Activated B cell treated with CpG ODN at 0.5 μM for 24 hours (primary cell): ENCODE measurements at regions of chr10 and their contacts with region 1.

Region 1: DNA sequence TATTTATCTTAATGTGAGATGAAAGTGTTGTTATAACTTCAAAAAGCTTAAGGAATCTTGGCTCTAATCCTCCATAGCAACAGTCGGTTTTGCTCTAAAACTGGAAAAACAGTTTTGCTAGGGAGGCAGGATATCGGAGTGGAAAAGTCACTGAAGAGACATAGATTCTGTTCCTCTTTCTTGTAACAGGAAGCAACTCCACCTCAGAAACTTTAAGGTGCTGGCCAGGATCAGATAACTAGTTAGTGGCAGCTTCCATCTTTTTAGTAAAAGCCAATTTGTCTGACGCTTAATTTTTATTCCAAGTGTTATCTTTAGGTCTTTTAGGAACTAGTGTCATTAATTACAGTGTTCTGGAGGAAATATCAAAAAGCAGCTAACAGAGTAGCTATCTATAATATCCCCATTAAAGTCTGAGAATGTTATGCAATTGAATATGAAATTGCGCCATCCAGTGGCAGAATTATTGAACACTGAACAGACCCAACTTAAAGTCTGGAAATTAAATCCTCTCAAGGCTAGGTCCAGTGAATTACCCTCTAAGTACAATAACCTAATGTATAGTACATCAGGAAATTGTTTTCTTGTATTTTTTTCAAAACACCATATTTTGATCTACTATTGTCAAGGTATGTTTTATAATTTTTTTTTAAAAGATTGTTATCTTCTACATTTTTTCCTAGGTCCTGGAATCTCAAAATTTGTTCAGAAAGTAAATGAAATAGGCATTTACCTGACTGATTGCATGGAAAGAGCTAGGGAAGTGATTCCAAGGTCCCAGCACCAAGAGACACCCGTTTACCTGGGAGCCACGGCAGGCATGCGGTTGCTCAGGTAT is 65.9 kb upstream of the CC2D2B start:
- DNase-seq: no peak
- ATAC-seq: peak; percentile 41
- H3K4me3 Mint-ChIP-seq: peak overlapping the region; percentile 66
- H3K27ac Mint-ChIP-seq: peak overlapping the region; percentile 95
- H3K4me1 Mint-ChIP-seq: peaks cover 54% of the 10 kb centered on the region
- H3K27me3 Mint-ChIP-seq: no peaks in the 10 kb centered on the region
- CTCF ChIP-seq: no peak

Region 2: DNA sequence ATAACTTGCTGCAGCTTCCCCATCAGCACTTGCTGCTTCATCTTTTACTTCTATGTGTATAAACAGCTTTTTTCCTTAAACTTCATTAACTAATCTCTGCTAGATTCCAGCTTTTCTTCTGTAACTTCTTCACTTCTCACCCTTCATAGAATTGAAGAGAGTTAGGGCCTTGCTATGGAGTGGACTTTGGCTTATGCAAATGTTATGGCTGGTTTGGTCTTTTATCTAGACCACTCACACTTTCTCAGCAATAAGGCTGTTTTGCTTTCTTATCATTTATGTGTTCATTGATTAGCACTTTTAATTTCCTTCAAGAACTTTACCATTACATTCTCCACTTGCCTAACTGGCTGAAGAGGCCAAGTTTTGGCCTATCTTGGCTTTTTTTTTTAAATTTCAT is 1360.5 kb before region 1 on chr10:
- CTCF ChIA-PET with region 1: no interaction called
- POLR2A ChIA-PET with region 1: no interaction called
- intact Hi-C with region 1: no loop called
- DNase-seq: no peak
- ATAC-seq: no peak
- H3K4me3 Mint-ChIP-seq: no peak overlapping the region
- H3K27ac Mint-ChIP-seq: no peak overlapping the region
- H3K4me1 Mint-ChIP-seq: no peaks in the 10 kb centered on the region
- H3K27me3 Mint-ChIP-seq: no peaks in the 10 kb centered on the region
- CTCF ChIP-seq: no peak

Region 3: DNA sequence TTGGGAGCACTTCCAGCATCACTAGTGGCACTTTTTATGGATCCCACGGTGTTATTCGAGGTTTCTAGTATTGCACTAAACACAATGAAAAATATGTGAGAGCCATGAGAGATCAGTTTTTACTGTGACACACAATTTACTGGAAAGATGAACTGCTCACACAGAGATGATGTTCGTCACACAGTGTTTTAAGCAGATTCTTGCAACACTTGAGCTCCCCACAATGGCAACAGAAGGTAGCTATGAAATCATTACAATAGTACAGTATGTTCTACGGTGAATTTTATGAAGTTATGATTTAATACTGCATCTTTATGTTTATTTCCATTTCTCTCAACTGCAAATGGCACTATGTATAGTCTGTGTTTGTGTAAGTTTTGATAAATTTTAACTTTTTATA is 113.4 kb before region 1 on chr10:
- CTCF ChIA-PET with region 1: interaction called, 8 read pairs
- POLR2A ChIA-PET with region 1: no interaction called
- intact Hi-C with region 1: loop called (anchors 1 kb)
- DNase-seq: no peak
- ATAC-seq: no peak
- H3K4me3 Mint-ChIP-seq: no peak overlapping the region
- H3K27ac Mint-ChIP-seq: no peak overlapping the region
- H3K4me1 Mint-ChIP-seq: peaks cover 34% of the 10 kb centered on the region
- H3K27me3 Mint-ChIP-seq: no peaks in the 10 kb centered on the region
- CTCF ChIP-seq: no peak

Region 4: DNA sequence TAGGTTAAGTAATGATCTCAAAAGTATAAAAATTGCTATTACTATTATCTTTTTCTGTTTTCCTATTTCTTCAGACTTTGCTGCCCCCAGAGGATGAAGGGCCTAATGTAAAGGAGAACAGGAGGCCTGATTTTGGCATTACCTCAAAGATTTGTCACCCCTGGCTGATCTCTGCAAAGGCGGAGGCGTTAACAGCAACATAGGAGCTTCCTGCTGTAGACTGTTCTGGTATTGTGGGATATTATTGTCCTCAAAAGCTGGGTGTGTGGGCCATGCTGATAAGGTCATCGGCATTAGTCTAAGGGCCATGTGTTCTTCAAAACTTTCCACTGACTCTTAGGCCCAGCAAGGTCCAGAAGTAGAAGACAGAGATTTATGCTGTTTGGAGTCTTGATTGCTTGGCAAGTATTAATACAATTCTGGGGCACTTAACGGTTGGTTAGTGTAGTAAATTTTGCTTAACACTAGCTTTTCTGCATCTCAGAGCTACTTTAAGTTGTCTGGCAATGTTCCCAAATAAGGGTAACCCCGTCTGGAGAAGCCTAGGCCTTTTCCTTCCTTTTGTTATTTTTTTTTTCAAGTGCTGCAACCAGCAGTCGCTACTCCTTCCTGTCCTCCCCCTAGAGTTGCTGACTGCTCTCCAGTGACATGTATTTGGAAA is 99.9 kb before region 1 on chr10:
- CTCF ChIA-PET with region 1: interaction called, 38 read pairs
- POLR2A ChIA-PET with region 1: interaction called, 14 read pairs
- intact Hi-C with region 1: loop called (anchors 1 kb)
- DNase-seq: no peak
- ATAC-seq: peak; percentile 83
- H3K4me3 Mint-ChIP-seq: peak overlapping the region; percentile 85
- H3K27ac Mint-ChIP-seq: peak overlapping the region; percentile 99
- H3K4me1 Mint-ChIP-seq: peaks cover 55% of the 10 kb centered on the region
- H3K27me3 Mint-ChIP-seq: no peaks in the 10 kb centered on the region
- CTCF ChIP-seq: no peak

Region 5: DNA sequence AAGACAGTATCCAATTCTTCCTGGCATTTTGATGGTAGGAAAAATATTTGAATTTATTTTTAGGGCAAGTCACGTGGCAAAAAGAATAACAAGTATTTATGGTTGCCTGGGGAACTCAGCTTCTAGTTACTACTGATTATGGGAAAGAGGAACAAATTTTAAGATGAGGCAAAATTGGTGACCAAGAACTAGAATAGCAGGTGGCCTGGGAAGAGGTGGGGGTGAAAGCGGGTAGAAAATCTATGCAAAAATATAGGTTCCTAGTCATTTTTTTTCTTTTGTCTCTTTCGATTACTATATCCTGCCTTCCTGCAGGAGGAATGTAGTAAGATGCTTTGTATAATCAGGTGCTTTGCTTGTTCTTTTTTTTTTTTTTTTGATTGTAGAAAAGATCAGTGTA is 58.1 kb before region 1 on chr10:
- CTCF ChIA-PET with region 1: interaction called, 25 read pairs
- POLR2A ChIA-PET with region 1: interaction called, 298 read pairs
- intact Hi-C with region 1: loop called (anchors 1 kb)
- DNase-seq: no peak
- ATAC-seq: peak; percentile 55
- H3K4me3 Mint-ChIP-seq: peak overlapping the region; percentile 53
- H3K27ac Mint-ChIP-seq: peak overlapping the region; percentile 99
- H3K4me1 Mint-ChIP-seq: peaks cover 95% of the 10 kb centered on the region
- H3K27me3 Mint-ChIP-seq: no peaks in the 10 kb centered on the region
- CTCF ChIP-seq: no peak

Region 6: DNA sequence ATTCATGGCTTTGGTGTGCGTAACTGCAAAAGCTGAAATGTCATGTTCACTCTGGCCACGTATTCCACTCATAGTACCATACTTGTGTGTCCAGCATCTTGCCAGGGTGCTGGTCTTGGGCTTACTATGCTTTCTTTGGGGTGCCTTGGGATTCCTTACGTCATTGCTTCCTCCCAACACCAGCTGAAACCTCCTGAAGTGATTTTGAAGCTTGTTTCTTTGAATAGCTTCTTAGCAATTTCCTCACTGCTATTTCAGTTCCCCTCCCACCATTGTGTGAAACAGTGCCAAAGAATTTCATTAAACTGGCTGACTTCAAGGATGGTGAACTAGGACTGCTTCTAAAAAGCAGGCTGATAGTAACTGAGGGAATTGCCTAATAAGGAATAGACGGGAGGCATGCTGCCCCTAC is 49.0 kb before region 1 on chr10:
- CTCF ChIA-PET with region 1: interaction called, 25 read pairs
- POLR2A ChIA-PET with region 1: interaction called, 298 read pairs
- intact Hi-C with region 1: no loop called
- DNase-seq: no peak
- ATAC-seq: peak; percentile 15
- H3K4me3 Mint-ChIP-seq: peak overlapping the region; percentile 32
- H3K27ac Mint-ChIP-seq: peak overlapping the region; percentile 94
- H3K4me1 Mint-ChIP-seq: peaks cover 94% of the 10 kb centered on the region
- H3K27me3 Mint-ChIP-seq: no peaks in the 10 kb centered on the region
- CTCF ChIP-seq: no peak

Region 7: GRCh38 chr10:95814011-95814727 is 27.7 kb before region 1 on chr10:
- CTCF ChIA-PET with region 1: interaction called, 39 read pairs
- POLR2A ChIA-PET with region 1: interaction called, 167 read pairs
- intact Hi-C with region 1: no loop called
- DNase-seq: no peak
- ATAC-seq: no peak
- H3K4me3 Mint-ChIP-seq: peak overlapping the region; percentile 37
- H3K27ac Mint-ChIP-seq: peak overlapping the region; percentile 67
- H3K4me1 Mint-ChIP-seq: peaks cover 79% of the 10 kb centered on the region
- H3K27me3 Mint-ChIP-seq: no peaks in the 10 kb centered on the region
- CTCF ChIP-seq: no peak

Region 8: GRCh38 chr10:95864906-95865813 is 23.3 kb after region 1 on chr10:
- CTCF ChIA-PET with region 1: interaction called, 80 read pairs
- POLR2A ChIA-PET with region 1: interaction called, 18 read pairs
- intact Hi-C with region 1: loop called (anchors 1 kb)
- DNase-seq: no peak
- ATAC-seq: peak; percentile 98
- H3K4me3 Mint-ChIP-seq: no peak overlapping the region
- H3K27ac Mint-ChIP-seq: peak overlapping the region; percentile 89
- H3K4me1 Mint-ChIP-seq: peaks cover 25% of the 10 kb centered on the region
- H3K27me3 Mint-ChIP-seq: no peaks in the 10 kb centered on the region
- CTCF ChIP-seq: no peak

Region 9: DNA sequence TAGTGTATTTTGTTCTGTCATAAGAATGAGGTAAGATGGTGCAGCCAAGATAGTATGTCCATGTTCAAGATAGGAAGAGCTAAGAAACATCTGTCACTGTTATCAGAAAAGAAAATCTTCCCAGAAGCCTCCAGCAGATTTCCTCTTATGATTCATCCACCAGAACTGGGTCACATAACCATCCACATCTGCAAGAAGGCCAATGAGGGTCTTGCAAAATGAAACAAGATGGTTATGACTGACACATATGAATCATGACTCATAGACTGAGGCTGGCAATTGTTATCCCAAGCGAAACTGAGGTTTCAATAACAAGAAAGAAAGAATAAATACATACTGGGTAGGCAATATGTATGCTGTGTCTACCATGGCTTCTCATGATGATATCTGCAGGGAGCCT is 231.8 kb after region 1 on chr10:
- CTCF ChIA-PET with region 1: no interaction called
- POLR2A ChIA-PET with region 1: no interaction called
- intact Hi-C with region 1: no loop called
- DNase-seq: no peak
- ATAC-seq: peak; percentile 14
- H3K4me3 Mint-ChIP-seq: no peak overlapping the region
- H3K27ac Mint-ChIP-seq: no peak overlapping the region
- H3K4me1 Mint-ChIP-seq: peaks cover 4% of the 10 kb centered on the region
- H3K27me3 Mint-ChIP-seq: no peaks in the 10 kb centered on the region
- CTCF ChIP-seq: no peak